H1 (cell line): ENCODE measurements at regions of chr1 and their contacts with region 1.

Region 1: GRCh38 chr1:161165742-161166668 is at the start of gene PPOX:
- DNase-seq: peak; percentile 90 to 94
- H3K4me3 ChIP-seq: peak within 1 kb of the TSS; percentile 64 to 87 (median 82)
- H3K27ac ChIP-seq: peak within 1 kb of the TSS; percentile 47
- H3K4me1 ChIP-seq: peaks cover 0 to 7% (median 5%) of the 10 kb centered on the region in 4 experiments; a peak in 4 of 7 replicates
- H3K27me3 ChIP-seq: no peaks in the 10 kb centered on the region
- CTCF ChIP-seq: peak; percentile 45 to 55 (median 50)
- EP300 ChIP-seq: 0 out of 3 replicates have a peak, but pooled peaks of 1 of the 2 experiments have one; percentile 14
- POLR2A ChIP-seq: peak; percentile 56 to 84
- RAD21 ChIP-seq: no peak
- total RNA-seq, gene PPOX: 32.1 and 40.4 TPM in 2 replicates

Region 2: GRCh38 chr1:161082991-161083742 is 82.8 kb before region 1 on chr1:
- CTCF ChIA-PET with region 1: no interaction called
- POLR2A ChIA-PET with region 1: no interaction called
- DNase-seq: no peak
- H3K4me3 ChIP-seq: no peak overlapping the region
- H3K27ac ChIP-seq: no peak overlapping the region
- H3K4me1 ChIP-seq: peaks cover 0 to 6% (median 0%) of the 10 kb centered on the region in 4 experiments; a peak in 4 of 7 replicates
- H3K27me3 ChIP-seq: no peaks in the 10 kb centered on the region
- CTCF ChIP-seq: no peak
- EP300 ChIP-seq: no peak
- POLR2A ChIP-seq: no peak
- RAD21 ChIP-seq: no peak

Region 3: GRCh38 chr1:161139765-161140164 is 26.2 kb before region 1 on chr1:
- CTCF ChIA-PET with region 1: interaction called, 29 read pairs
- POLR2A ChIA-PET with region 1: interaction called, 3 read pairs
- DNase-seq: no peak
- H3K4me3 ChIP-seq: no peak overlapping the region
- H3K27ac ChIP-seq: no peak overlapping the region
- H3K4me1 ChIP-seq: no peaks in the 10 kb centered on the region
- H3K27me3 ChIP-seq: no peaks in the 10 kb centered on the region
- CTCF ChIP-seq: peak in 2 of 3 experiments; percentile 24 to 43; a peak in 2 of 4 replicates
- EP300 ChIP-seq: no peak
- POLR2A ChIP-seq: no peak
- RAD21 ChIP-seq: peak; percentile 60 to 68

Region 4: DNA sequence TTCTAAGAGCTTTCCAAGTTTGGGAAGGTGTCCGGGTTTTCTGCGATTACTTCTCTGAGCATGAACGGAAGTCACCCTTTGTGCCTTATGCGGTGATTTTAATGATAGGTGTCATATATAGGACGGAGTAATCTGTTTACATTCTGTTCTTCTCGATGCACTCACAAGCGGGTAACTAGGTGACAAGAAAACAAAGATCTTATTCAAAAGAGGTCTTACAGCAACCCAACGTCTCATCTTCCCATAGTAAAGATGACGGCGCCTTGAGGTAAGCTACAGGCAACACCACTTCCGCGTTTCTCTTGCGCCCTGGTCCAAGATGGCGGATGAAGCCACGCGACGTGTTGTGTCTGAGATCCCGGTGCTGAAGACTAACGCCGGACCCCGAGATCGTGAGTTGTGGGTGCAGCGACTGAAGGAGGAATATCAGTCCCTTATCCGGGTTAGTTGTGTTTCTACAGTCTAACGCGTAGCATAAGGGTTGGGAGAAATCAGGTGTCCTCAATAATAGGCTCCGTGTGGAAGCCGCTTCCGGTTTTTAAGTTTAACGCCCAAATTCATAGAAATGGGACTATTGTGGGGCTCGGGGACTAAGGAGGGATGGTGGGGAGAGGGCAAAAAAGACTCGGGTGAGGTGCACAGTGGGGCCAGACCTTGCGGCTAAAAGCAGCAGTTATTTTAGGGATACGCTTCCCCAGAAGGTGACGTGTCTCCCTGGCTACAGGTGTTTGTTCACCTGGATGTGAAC is 12.2 kb before region 1 on chr1 and contains the start of gene UFC1:
- CTCF ChIA-PET with region 1: interaction called, 32 read pairs
- POLR2A ChIA-PET with region 1: interaction called, 34 read pairs
- DNase-seq: peak in 1 of 2 experiments; percentile 80
- H3K4me3 ChIP-seq: peak within 1 kb of the TSS; percentile 91 to 99 (median 96)
- H3K27ac ChIP-seq: peak within 1 kb of the TSS; percentile 98
- H3K4me1 ChIP-seq: peaks cover 0 to 7% (median under 1%) of the 10 kb centered on the region in 4 experiments; a peak in 3 of 7 replicates
- H3K27me3 ChIP-seq: no peaks in the 10 kb centered on the region
- CTCF ChIP-seq: no peak
- EP300 ChIP-seq: 0 out of 3 replicates have a peak, but pooled peaks of 1 of the 2 experiments have one; percentile 2
- POLR2A ChIP-seq: peak; percentile 84 to 94
- RAD21 ChIP-seq: no peak
- total RNA-seq, gene UFC1: 67.8 and 71.0 TPM in 2 replicates

Region 5: GRCh38 chr1:161177112-161177935 is 11.3 kb after region 1 on chr1 and contains the start of gene B4GALT3:
- CTCF ChIA-PET with region 1: interaction called, 27 read pairs
- POLR2A ChIA-PET with region 1: interaction called, 51 read pairs
- DNase-seq: peak in 1 of 2 experiments; percentile 100
- H3K4me3 ChIP-seq: peak within 1 kb of the TSS; percentile 66 to 96 (median 84)
- H3K27ac ChIP-seq: peak within 1 kb of the TSS; percentile 88
- H3K4me1 ChIP-seq: peaks cover 0 to 13% (median under 1%) of the 10 kb centered on the region in 4 experiments; a peak in 3 of 7 replicates
- H3K27me3 ChIP-seq: no peaks in the 10 kb centered on the region
- CTCF ChIP-seq: peak; percentile 32 to 40 (median 38); a peak in 3 of 4 replicates
- EP300 ChIP-seq: no peak
- POLR2A ChIP-seq: peak; percentile 89 to 97
- RAD21 ChIP-seq: peak in 1 of 2 experiments; percentile 23; a peak in 2 of 4 replicates
- total RNA-seq, gene B4GALT3: 42.3 and 45.5 TPM in 2 replicates